Transverse colon (tissue), 4 donors: ENCODE measurements at regions of chr3 and their contacts with region 1.

Region 1: GRCh38 chr3:47420511-47421484 is 40.0 kb downstream of the PTPN23 start:
- DNase-seq: peak; percentile 93
- H3K4me3 ChIP-seq: no peak overlapping the region
- H3K27ac ChIP-seq: peak overlapping the region; percentile 59 to 78 (median 70)
- H3K4me1 ChIP-seq: peaks cover 15 to 31% (median 29%) of the 10 kb centered on the region in 4 donors
- H3K27me3 ChIP-seq: no peaks in the 10 kb centered on the region
- CTCF ChIP-seq: peak; percentile 89 to 99 (median 94)
- EP300 ChIP-seq: no peak
- POLR2A ChIP-seq: no peak

Region 2: GRCh38 chr3:47469616-47470015 is 48.8 kb after region 1 on chr3:
- in situ Hi-C with region 1: loop called in 1 of 4 experiments (anchors 5 kb)
- intact Hi-C with region 1: no loop called
- DNase-seq: peak; percentile 17
- H3K4me3 ChIP-seq: no peak overlapping the region
- H3K27ac ChIP-seq: no peak overlapping the region
- H3K4me1 ChIP-seq: peaks cover 4 to 24% (median 9%) of the 10 kb centered on the region in 4 donors
- H3K27me3 ChIP-seq: no peaks in the 10 kb centered on the region
- CTCF ChIP-seq: no peak
- EP300 ChIP-seq: no peak
- POLR2A ChIP-seq: no peak

Region 3: DNA sequence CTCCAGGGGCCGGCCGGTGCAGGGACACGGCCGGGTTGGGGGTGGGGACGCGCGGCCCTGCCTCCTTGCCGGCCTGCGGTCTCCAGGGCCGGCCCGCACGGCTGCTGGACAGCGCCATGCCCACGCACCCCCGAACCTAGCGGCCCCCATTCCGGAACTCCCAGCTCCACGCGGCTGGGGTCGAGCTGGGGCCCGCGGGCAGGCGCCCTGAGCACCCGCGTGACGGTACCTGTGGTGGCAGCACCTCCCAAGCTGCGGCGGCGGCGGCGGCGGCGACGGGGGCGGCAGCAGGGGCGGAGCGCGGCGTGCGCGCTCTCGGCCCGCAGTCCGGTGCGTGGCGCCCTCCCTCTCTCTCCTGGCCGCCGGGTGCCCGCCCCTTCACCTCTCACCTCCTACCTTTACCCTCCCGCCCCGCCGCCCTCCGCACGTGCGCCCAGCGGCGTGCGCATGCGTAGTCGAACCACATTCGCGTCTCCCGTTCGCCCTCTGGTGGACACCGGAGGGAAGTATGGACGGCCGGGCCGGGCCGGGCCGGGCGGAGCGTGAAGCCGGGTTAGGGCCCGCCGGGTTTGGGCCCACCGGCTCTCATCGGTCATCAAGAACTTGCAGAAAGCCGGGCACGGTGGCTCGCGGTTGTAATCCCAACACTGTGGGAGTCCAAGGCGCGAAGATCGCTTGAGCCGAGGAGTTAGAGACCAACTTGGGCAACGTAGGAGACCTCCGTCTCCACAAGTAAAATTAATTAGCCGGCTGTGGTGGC is 55.0 kb after region 1 on chr3 and contains the start of gene SCAP:
- in situ Hi-C with region 1: loop called in 2 of 4 experiments (anchors 5 kb)
- intact Hi-C with region 1: loop called (anchors 1 kb)
- DNase-seq: peak; percentile 96
- H3K4me3 ChIP-seq: peak within 1 kb of the TSS; percentile 82 to 96 (median 87)
- H3K27ac ChIP-seq: peak within 1 kb of the TSS; percentile 85 to 91 (median 90)
- H3K4me1 ChIP-seq: peaks cover 10 to 32% (median 21%) of the 10 kb centered on the region in 4 donors
- H3K27me3 ChIP-seq: no peaks in the 10 kb centered on the region
- CTCF ChIP-seq: peak; percentile 91 to 98 (median 96)
- EP300 ChIP-seq: no peak
- POLR2A ChIP-seq: peak; percentile 14
- total RNA-seq, gene SCAP: 160 to 288 (median 198) TPM

Region 4: DNA sequence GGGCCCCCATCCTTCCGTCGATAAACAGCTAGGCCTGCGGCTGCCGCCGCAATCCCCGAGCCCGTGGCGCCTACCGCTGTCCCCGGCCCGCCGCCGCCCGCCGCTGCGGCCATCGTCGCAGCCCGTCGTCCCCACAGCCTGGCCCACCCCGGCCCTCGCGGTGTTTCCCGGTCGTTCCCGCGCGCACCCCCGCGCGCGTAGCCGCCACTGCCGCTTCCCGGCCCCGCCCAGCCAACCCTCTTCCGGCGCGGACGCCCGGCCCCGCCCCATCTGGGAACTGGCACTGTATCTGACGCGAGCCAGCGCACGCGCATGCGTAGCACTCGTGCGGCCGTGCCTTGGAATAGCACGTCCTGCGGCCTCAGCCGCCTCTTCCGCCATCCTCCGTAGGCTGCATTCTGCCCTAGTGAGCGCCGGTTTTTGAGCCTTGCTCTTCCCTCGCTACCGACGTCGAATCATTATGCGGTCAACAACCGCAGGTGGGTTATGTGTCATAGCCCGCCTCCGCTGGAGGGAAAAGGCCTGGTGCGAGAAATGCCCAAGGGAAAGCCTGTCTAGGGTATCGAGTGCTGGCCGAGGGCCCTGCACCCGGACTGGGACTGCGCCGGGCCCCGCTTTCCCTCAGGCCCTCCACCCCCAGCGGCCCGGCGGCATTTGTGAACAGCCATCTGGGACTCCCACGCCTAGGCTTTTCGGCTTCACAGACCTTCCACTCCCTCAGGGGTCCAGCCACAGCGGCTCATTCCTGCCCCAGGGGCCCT is 361.1 kb after region 1 on chr3 and contains the start of gene SMARCC1:
- in situ Hi-C with region 1: loop called in 1 of 4 experiments (anchors 25 kb)
- intact Hi-C with region 1: no loop called
- DNase-seq: peak; percentile 99
- H3K4me3 ChIP-seq: peak within 1 kb of the TSS; percentile 88 to 95 (median 94)
- H3K27ac ChIP-seq: peak within 1 kb of the TSS; percentile 94 to 99 (median 96)
- H3K4me1 ChIP-seq: peaks cover 10 to 34% (median 28%) of the 10 kb centered on the region in 4 donors
- H3K27me3 ChIP-seq: no peaks in the 10 kb centered on the region
- CTCF ChIP-seq: peak in 4 of 5 experiments; percentile 8 to 48 (median 27)
- EP300 ChIP-seq: peak; percentile 5
- POLR2A ChIP-seq: peak; percentile 96
- total RNA-seq, gene SMARCC1: 21.3 to 70.8 (median 45.0) TPM